Tibial artery (tissue), 4 donors: ENCODE measurements at regions of chr4 and their contacts with region 1.

Region 1: GRCh38 chr4:118888666-118889311 is at the start of gene SYNPO2:
- DNase-seq: peak; percentile 85 to 93
- H3K4me3 ChIP-seq: peak within 1 kb of the TSS; percentile 80 to 92
- H3K27ac ChIP-seq: peak within 1 kb of the TSS; percentile 77 to 90
- H3K4me1 ChIP-seq: peaks cover 0 to 12% (median 0%) of the 10 kb centered on the region in 4 donors
- H3K27me3 ChIP-seq: no peaks in the 10 kb centered on the region
- CTCF ChIP-seq: peak in 1 of 2 experiments; percentile 15

Region 2: GRCh38 chr4:118740869-118741268 is 147.9 kb before region 1 on chr4:
- intact Hi-C with region 1: loop called (anchors 10 kb)
- DNase-seq: no peak
- H3K4me3 ChIP-seq: peak overlapping the region; percentile 11 to 12
- H3K27ac ChIP-seq: peak overlapping the region; percentile 36 to 51
- H3K4me1 ChIP-seq: peaks cover 0 to 36% (median 12%) of the 10 kb centered on the region in 4 donors
- H3K27me3 ChIP-seq: no peaks in the 10 kb centered on the region
- CTCF ChIP-seq: peak; percentile 34 to 52

Region 3: DNA sequence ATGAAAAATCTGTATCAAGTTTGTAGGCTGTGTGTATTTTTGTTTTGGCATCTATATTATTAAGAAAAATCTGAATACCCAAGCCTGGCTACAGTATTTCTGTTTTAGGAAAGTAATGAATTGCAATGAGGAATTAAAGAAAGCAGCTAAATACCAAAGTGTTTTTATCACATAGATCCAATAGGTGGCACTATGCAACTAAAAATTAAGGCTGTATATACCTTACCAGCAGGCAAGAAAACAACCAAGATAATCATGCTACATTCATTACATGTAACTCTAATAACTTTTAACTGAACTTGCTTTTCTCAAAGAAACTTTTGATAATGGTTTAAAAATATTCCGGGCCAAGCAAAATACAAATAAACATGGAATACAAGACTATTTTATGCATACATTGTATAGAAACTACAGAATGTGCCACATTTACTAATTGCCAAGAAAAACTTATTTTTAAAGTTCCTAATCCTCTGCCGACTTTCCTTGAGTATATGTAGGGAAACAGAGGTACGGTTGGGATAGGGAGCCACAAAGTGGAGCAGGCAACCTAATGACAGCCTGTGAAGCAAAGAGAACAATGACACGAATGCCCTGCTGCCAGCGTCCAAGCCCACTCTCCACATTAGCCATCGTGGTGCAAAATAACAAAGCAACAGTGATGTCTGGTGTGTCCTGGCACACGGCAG is 116.6 kb before region 1 on chr4:
- intact Hi-C with region 1: loop called (anchors 5 kb)
- DNase-seq: no peak
- H3K4me3 ChIP-seq: peak overlapping the region; percentile 12 to 16
- H3K27ac ChIP-seq: peak overlapping the region; percentile 78 to 81
- H3K4me1 ChIP-seq: peaks cover 0 to 80% (median 46%) of the 10 kb centered on the region in 4 donors
- H3K27me3 ChIP-seq: no peaks in the 10 kb centered on the region
- CTCF ChIP-seq: peak; percentile 56 to 77

Region 4: GRCh38 chr4:118783887-118784286 is 104.9 kb before region 1 on chr4:
- intact Hi-C with region 1: no loop called
- DNase-seq: peak in 1 of 2 donors; percentile 68
- H3K4me3 ChIP-seq: no peak overlapping the region
- H3K27ac ChIP-seq: no peak overlapping the region
- H3K4me1 ChIP-seq: peaks cover 0 to 44% (median 7%) of the 10 kb centered on the region in 4 donors
- H3K27me3 ChIP-seq: no peaks in the 10 kb centered on the region
- CTCF ChIP-seq: no peak

Region 5: DNA sequence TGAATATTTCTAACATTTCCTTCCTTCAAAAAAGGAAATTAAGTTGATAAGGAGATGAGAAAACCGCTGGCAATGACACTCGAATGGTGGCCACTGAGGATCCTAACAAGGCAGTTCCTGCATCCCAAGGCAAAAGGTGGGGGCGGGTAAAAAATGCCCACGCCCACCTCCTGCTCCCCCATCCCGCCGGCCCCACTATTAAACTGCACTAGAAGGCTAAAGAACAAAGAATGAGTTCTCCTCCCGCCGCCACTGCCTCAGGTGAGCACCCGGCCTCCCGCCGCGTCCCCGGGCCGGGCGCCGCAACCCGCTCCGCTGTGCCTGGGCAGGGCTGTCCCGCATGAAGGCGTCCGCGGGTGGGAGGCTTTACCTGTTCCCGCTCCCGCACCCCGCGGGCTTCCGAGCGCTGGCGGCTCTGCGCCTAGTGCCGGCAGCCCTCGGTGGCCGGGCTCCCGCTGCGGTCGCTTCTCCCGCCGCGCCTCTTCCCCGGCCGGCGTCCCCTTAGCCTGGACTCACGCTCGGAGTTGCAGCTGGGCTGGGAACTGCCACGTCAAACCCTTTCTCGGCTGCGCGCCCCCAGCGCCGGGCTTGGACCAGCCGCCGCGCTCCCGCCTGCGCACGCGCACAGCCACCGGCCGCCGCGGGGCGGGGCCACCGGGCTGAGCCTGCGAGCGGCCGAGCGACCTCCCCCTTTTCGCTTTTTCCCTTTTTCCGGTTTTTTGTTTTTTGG is 53.1 kb before region 1 on chr4 and contains the start of gene SEC24D:
- intact Hi-C with region 1: loop called (anchors 2 kb)
- DNase-seq: peak; percentile 85 to 92
- H3K4me3 ChIP-seq: peak within 1 kb of the TSS; percentile 67 to 92
- H3K27ac ChIP-seq: peak within 1 kb of the TSS; percentile 91 to 95
- H3K4me1 ChIP-seq: peaks cover 0 to 46% (median 22%) of the 10 kb centered on the region in 4 donors
- H3K27me3 ChIP-seq: no peaks in the 10 kb centered on the region
- CTCF ChIP-seq: peak; percentile 6 to 13

Region 6: GRCh38 chr4:119286377-119287002 is 397.7 kb after region 1 on chr4:
- intact Hi-C with region 1: loop called (anchors 5 kb)
- DNase-seq: no peak
- H3K4me3 ChIP-seq: no peak overlapping the region
- H3K27ac ChIP-seq: peak overlapping the region in 1 of 2 donors; percentile 58
- H3K4me1 ChIP-seq: peaks cover 0 to 30% (median 17%) of the 10 kb centered on the region in 4 donors
- H3K27me3 ChIP-seq: no peaks in the 10 kb centered on the region
- CTCF ChIP-seq: peak; percentile 53 to 77